ENCODE measurements at regions of chr11 and their contacts with region 1.

Region 1: DNA sequence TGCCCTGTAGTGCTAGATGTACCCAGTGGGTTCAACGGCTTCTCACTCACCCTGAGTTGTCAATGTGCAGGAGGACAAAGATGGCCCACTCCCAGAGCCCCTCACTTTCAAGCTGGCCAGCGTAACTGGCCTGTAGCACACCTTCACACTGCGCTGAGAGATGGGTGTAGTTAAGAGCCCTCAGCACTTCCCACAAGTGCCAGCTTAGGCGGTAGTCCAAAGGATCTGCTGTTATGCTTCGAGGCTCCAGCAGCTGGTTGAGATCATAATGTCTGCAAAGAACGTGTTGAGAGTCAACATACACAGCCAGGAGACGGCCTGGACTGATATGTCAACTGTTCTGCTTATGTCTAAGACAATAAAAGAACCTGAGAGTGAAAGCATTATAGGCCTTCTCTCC is 14.7 kb upstream of the CHRNA10 start:
- DNase-seq: no peak

Region 2: GRCh38 chr11:3614742-3615171 is 71.2 kb before region 1 on chr11:
- intact Hi-C with region 1: no loop called
- DNase-seq: no peak

Region 3: GRCh38 chr11:3644817-3645235 is 41.1 kb before region 1 on chr11 and contains the start of gene ART1:
- intact Hi-C with region 1: no loop called
- DNase-seq: no peak
- total RNA-seq, gene ART1: 0.42 TPM in 1 of 2 donors, not detected in the other

Region 4: DNA sequence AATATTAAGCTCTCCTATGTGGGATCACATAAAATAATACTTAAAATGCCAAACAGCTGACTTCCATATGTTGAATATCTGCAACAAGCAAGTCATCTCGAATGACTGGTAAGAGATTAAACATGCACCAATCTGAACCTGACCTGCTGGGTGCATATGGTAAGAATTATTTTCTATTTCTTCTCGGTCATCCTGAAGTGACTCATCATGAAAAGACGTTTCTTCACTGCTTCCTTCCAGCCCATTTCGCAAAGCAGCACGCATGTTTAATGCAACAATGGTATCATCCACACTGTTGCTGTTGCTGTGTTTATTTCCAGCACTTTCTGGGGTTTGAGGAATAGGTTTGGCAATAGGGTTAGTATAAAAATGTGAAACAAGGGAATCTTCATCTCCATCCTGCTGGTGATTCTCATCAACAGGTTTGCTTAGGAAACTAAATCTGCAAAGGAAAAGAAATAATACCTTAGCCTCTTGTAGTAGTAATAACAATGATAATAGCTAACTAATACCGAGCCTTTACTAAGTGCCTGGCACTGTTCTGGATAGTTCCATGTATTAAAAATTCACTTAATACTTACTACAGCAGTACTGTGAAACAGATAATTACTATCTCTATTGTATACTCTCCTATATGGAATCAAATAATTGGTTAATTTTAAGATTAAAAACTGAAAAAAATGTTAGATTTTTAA is 37.2 kb after region 1 on chr11:
- intact Hi-C with region 1: loop called in 1 of 2 experiments (anchors 5 kb)
- DNase-seq: no peak

Region 5: GRCh38 chr11:3738241-3738640 is 52.3 kb after region 1 on chr11:
- intact Hi-C with region 1: no loop called
- DNase-seq: no peak

Region 6: DNA sequence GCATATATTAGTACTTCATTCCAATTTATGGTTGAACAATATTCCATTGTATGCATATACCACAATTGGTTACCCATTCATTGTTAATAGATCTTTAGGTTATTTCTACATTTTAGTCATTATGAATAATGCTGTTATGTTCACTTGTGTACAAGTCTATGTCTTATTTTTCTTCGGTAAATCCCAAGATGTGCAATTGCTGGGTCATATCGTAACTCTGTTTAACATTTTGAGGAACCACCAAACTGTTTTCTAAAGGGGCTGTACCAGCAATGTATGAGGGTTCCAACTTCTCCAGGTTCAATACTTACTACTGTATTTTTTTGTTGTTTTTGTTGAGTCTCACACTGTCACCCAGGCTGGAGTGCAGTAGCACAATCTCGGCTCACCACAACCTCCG is 78.3 kb after region 1 on chr11:
- intact Hi-C with region 1: no loop called
- DNase-seq: no peak